IMR-90 (cell line): ENCODE measurements at regions of chr13 and their contacts with region 1.

Region 1: GRCh38 chr13:112873851-112874750 is 94.9 kb upstream of the MCF2L start:
- DNase-seq: peak; percentile 50
- ATAC-seq: peak; percentile 99
- H3K4me3 ChIP-seq: no peak overlapping the region
- H3K27ac ChIP-seq: no peak overlapping the region
- H3K4me1 ChIP-seq: no peaks in the 10 kb centered on the region
- H3K27me3 ChIP-seq: no peaks in the 10 kb centered on the region
- CTCF ChIP-seq: peak; percentile 86
- POLR2A ChIP-seq: no peak
- RAD21 ChIP-seq: peak; percentile 92

Region 2: GRCh38 chr13:111474136-111475002 is 1399.7 kb before region 1 on chr13:
- CTCF ChIA-PET with region 1: no interaction called
- POLR2A ChIA-PET with region 1: no interaction called
- dilution Hi-C with region 1: no loop called
- in situ Hi-C with region 1: no loop called
- intact Hi-C with region 1: loop called (anchors 10 kb)
- DNase-seq: peak; percentile 35
- ATAC-seq: peak; percentile 92
- H3K4me3 ChIP-seq: no peak overlapping the region
- H3K27ac ChIP-seq: no peak overlapping the region
- H3K4me1 ChIP-seq: no peaks in the 10 kb centered on the region
- H3K27me3 ChIP-seq: no peaks in the 10 kb centered on the region
- CTCF ChIP-seq: peak; percentile 57
- POLR2A ChIP-seq: no peak
- RAD21 ChIP-seq: peak; percentile 57

Region 3: DNA sequence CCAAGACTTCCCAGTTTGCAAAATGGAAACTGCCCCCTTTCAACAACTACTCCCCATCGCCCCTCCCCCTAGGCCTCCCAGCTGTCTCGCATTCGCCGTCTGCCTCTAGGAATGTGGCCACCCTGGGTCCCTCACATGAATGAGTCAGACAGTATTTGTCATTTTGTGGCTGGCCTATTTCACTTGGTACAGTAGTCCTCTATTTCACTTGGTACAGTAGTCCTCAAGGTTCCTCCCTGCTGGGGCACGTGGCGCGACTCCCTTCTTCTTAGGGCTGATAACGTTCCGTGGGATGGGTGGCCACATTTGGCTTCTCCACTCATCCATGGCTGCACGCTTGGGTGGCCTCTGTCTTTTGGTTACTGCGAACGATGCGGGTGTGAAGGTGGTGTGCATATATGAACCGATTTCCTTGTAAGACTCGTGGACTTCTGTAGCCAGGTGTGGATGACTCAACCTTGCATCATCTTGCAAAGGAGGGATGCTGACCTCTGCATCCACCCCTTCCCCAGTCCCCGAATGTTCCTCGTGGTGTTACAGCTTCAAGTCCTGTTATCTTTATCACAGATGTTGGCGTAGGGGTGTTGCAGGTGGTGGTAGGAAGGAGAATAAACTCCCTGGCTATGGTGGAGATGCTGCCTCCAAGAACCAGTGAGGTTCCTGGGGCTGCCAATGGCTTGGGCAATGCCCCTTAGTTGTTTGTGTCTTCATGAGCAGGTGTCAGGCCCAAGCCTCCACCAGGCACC is 919.3 kb before region 1 on chr13:
- CTCF ChIA-PET with region 1: no interaction called
- POLR2A ChIA-PET with region 1: no interaction called
- dilution Hi-C with region 1: no loop called
- in situ Hi-C with region 1: no loop called
- intact Hi-C with region 1: no loop called
- DNase-seq: no peak
- ATAC-seq: no peak
- H3K4me3 ChIP-seq: no peak overlapping the region
- H3K27ac ChIP-seq: no peak overlapping the region
- H3K4me1 ChIP-seq: no peaks in the 10 kb centered on the region
- H3K27me3 ChIP-seq: no peaks in the 10 kb centered on the region
- CTCF ChIP-seq: no peak
- POLR2A ChIP-seq: no peak
- RAD21 ChIP-seq: no peak

Region 4: GRCh38 chr13:112616586-112617362 is 257.3 kb before region 1 on chr13:
- CTCF ChIA-PET with region 1: interaction called, 4 read pairs
- POLR2A ChIA-PET with region 1: no interaction called
- dilution Hi-C with region 1: no loop called
- in situ Hi-C with region 1: loop called (anchors 10 kb)
- intact Hi-C with region 1: loop called (anchors 1 kb)
- DNase-seq: peak; percentile 52
- ATAC-seq: peak; percentile 84
- H3K4me3 ChIP-seq: no peak overlapping the region
- H3K27ac ChIP-seq: no peak overlapping the region
- H3K4me1 ChIP-seq: no peaks in the 10 kb centered on the region
- H3K27me3 ChIP-seq: peaks cover 39% of the 10 kb centered on the region
- CTCF ChIP-seq: peak; percentile 53
- POLR2A ChIP-seq: no peak
- RAD21 ChIP-seq: peak; percentile 56

Region 5: GRCh38 chr13:112638157-112638750 is 235.8 kb before region 1 on chr13:
- CTCF ChIA-PET with region 1: no interaction called
- POLR2A ChIA-PET with region 1: no interaction called
- dilution Hi-C with region 1: no loop called
- in situ Hi-C with region 1: loop called (anchors 10 kb)
- intact Hi-C with region 1: loop called (anchors 1 kb)
- DNase-seq: no peak
- ATAC-seq: no peak
- H3K4me3 ChIP-seq: no peak overlapping the region
- H3K27ac ChIP-seq: no peak overlapping the region
- H3K4me1 ChIP-seq: 0 out of 2 replicates have a peak, but pooled peaks cover 2% of the 10 kb centered on the region
- H3K27me3 ChIP-seq: peaks cover 56% of the 10 kb centered on the region
- CTCF ChIP-seq: no peak
- POLR2A ChIP-seq: no peak
- RAD21 ChIP-seq: no peak

Region 6: DNA sequence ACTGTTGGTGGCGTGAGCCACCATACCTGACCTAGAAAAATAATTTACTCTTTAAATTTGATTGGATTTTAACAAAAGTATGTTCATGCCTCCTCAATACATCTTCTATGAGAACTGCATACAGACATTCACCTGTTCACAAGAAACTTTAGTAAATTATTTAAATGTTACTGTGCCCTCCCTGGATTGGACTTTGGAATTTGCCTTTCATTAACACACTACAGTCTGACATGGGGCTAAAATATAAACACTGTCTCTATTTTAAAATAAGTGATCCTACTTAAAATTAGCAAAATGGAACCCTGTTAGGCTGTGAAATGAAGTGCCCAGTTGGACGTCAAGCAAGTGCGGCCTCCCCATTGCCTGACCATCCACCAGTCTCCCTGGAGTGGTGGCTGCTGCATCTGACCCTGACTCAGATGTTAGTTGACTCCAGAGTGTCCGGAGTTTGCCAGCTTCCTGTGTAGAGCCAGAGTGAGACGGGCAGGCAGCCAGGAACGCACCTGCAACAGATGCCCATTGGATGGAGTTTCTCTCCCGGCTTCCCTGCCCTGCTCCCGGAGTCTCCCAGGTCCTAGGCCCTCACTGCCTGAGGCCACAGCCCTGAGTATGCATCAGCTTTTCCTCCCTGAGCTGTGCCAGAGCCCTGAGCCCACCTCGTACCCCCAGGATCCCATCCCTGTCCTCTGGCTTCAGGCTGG is 230.2 kb before region 1 on chr13:
- CTCF ChIA-PET with region 1: no interaction called
- POLR2A ChIA-PET with region 1: no interaction called
- dilution Hi-C with region 1: no loop called
- in situ Hi-C with region 1: loop called (anchors 10 kb)
- intact Hi-C with region 1: loop called (anchors 1 kb)
- DNase-seq: no peak
- ATAC-seq: no peak
- H3K4me3 ChIP-seq: no peak overlapping the region
- H3K27ac ChIP-seq: no peak overlapping the region
- H3K4me1 ChIP-seq: no peaks in the 10 kb centered on the region
- H3K27me3 ChIP-seq: peaks cover 25% of the 10 kb centered on the region
- CTCF ChIP-seq: no peak
- POLR2A ChIP-seq: no peak
- RAD21 ChIP-seq: no peak

Region 7: GRCh38 chr13:112689303-112690165 is 184.6 kb before region 1 on chr13 and contains the start of gene ATP11A:
- CTCF ChIA-PET with region 1: no interaction called
- POLR2A ChIA-PET with region 1: no interaction called
- dilution Hi-C with region 1: no loop called
- in situ Hi-C with region 1: no loop called
- intact Hi-C with region 1: loop called (anchors 2 kb)
- DNase-seq: peak; percentile 91
- ATAC-seq: peak; percentile 96
- H3K4me3 ChIP-seq: peak within 1 kb of the TSS; percentile 72
- H3K27ac ChIP-seq: peak within 1 kb of the TSS; percentile 40
- H3K4me1 ChIP-seq: peaks cover 14% of the 10 kb centered on the region
- H3K27me3 ChIP-seq: no peaks in the 10 kb centered on the region
- CTCF ChIP-seq: no peak
- POLR2A ChIP-seq: peak; percentile 92
- RAD21 ChIP-seq: peak; percentile 28; the same call in 1 of the 2 replicates
- total RNA-seq, gene ATP11A: 8.4 and 8.9 TPM in 2 replicates

Region 8: DNA sequence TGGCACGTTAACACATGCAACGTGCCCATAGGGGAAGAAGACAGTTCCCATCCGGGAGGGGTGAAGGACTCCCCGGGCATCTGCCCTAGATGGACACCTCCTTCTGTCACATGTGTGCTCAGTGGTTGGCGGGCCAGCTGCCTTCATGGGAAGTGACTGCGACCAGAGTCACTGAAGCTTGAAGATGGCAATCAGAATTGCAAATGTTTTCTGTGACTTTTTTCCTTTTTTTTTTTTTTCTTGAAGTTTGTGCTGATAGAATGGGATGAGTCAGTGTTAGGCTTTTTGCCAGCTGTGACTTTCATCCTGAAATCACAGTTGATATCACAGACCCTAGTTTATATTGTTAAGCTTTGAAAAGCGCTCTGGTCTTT is 14.3 kb before region 1 on chr13:
- CTCF ChIA-PET with region 1: no interaction called
- POLR2A ChIA-PET with region 1: no interaction called
- dilution Hi-C with region 1: no loop called
- in situ Hi-C with region 1: no loop called
- intact Hi-C with region 1: no loop called
- DNase-seq: peak; percentile 82
- ATAC-seq: peak; percentile 59
- H3K4me3 ChIP-seq: no peak overlapping the region
- H3K27ac ChIP-seq: no peak overlapping the region
- H3K4me1 ChIP-seq: peaks cover 3% of the 10 kb centered on the region
- H3K27me3 ChIP-seq: no peaks in the 10 kb centered on the region
- CTCF ChIP-seq: no peak
- POLR2A ChIP-seq: no peak
- RAD21 ChIP-seq: no peak

Region 9: DNA sequence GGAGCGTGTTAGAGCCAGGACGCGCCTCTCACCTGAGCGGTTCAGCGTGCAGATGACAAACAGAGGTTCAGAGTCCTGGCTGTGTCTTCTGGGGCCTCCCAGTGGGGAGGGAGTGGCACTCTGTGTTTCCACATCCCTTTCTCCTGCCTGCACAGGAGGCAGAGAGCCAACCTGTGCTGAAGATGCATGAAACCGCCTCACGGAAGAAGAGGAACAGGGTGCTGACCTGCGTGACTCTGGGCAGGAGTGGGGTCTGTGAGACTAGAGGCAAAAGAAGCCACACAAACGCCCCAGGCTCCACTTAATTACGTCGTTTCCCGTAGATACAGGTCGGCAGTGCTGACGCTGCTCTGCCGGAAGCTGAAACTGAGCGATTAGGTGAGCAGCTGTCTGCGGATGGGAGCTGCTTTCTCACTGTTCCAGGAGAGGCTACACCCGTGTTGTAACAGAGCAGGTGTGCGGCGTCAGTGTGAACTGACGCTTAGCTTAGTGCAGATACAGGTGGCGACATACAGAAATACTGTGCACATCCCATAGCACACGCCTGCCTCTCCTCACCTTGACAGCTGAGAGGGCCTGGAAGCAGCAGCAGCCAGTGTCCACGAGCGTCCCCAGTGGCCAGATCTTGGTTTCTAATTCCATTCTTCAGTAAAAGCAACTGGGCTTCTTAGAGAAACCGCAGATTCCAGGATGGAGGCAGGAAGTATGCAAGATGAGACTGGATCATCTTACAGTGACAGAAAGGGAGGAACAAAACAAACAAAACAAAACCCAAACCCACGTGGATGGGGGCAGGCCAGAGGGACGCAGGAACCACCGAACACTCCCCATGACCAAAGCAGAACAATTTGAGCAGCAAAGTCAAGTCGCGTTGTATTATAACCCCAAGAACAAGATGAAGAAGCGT is 57.2 kb after region 1 on chr13:
- CTCF ChIA-PET with region 1: no interaction called
- POLR2A ChIA-PET with region 1: no interaction called
- dilution Hi-C with region 1: no loop called
- in situ Hi-C with region 1: no loop called
- intact Hi-C with region 1: no loop called
- DNase-seq: peak; percentile 76
- ATAC-seq: peak; percentile 93
- H3K4me3 ChIP-seq: no peak overlapping the region
- H3K27ac ChIP-seq: no peak overlapping the region
- H3K4me1 ChIP-seq: no peaks in the 10 kb centered on the region
- H3K27me3 ChIP-seq: peaks cover 44% of the 10 kb centered on the region
- CTCF ChIP-seq: peak; percentile 67
- POLR2A ChIP-seq: no peak
- RAD21 ChIP-seq: peak; percentile 46